GM10248 (cell line): ENCODE measurements at regions of chr11 and their contacts with region 1.

Region 1: DNA sequence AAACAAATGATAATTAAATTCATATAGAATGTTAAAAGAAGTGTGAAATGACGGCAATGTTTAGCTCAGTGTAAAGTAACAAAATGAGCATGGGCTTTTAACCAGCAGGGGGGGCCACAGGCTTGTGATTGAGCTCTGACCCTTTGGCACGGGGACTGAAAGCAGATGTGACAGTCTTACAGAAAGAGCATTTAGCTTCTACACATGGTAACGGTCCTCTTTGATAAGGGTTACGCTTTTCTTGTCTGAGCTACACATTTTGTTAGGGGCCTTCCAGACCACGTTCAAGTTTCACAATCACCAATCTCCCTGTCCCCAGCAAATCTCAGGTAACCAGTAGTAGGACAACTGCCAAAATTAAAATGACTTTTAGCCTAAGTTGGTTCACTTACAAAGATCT is 262.5 kb downstream of the DCDC1 start:
- DNase-seq: peak; percentile 26
- CTCF ChIP-seq: peak; percentile 60

Region 2: DNA sequence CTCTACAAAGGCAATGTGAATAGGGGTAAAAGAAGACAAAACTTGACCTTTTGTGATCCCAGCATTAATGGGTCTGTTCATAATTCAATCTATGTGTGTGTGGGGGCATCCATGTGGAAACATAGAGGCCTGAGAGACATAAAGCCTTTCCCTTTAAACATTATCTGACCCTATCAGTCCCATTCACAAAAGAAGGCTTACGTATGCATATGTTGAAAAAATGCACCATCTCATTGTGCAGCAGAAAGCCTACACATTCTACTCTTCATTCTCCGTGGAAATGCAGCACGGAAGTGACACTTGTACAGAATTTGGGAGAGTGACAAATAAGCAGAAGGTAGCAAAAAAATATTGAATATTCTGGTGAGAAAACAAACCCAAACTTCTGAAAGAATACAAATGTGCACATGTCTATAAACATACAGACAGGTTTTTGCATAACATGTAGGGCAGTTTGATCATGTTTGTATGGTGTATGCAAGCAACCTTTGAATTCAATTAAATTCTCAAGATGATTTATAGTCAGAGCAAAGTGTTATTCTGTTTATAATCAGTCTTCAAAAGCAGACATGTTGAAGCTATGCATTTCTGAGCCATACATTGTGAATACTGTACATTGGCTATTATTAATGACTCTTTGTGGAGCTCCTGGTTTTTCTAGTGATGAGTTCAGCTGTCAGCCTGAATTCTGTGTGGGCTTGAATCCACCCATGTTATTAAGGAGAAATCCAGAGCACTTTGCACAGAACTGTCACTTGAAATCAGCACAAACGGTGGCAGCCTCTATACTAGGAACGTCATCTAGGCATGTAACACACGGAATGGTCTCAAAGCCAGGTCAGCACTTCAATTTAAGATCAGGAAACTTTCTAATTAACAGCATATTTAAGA is 25.7 kb after region 1 on chr11:
- CTCF ChIA-PET with region 1: interaction called, 10 read pairs
- POLR2A ChIA-PET with region 1: no interaction called
- DNase-seq: no peak
- CTCF ChIP-seq: no peak

Region 3: DNA sequence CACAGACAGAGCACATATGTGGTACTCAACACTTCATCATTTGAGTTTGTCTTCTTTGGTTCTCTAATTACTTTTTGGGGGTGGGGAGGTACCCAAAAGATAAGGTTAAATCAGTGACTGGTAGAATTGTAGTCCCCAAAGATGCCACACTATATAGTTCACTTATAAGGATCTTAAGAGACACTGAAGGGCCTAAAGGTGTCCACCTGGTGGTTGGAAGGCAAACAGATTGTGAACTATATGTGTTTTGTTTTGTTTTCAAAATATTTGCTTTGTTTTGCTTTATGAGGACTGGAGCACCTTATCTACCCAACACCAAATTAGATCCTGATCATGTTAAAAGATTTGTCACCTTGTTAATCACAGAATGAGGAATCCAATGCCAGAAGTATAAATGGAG is 126.4 kb after region 1 on chr11:
- CTCF ChIA-PET with region 1: interaction called, 12 read pairs
- POLR2A ChIA-PET with region 1: no interaction called
- DNase-seq: no peak
- CTCF ChIP-seq: no peak

Region 4: DNA sequence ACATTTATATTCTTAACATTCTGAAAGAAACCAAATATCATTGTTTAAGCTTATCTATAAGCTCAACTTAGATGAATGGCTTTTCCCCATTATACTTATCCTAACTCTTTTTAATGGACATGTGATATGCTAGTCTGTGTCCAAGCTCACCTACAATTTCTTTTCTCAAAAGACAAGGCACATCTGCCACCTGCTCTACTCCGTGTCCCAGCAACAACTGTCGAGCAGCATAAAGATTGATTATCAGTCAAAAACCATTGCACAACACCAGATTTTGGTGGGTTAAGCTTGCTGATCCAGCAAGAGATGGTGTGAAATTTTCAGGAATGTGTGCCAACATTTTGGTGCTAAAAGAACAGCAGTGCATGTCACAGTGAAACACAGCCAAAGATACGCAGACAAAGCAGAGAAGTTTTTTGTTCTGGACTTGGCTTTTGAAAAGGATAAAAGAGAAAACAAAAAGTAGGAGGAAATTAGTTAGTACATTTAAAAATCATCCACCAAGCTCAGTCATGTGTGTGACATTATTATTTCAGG is 196.7 kb after region 1 on chr11:
- CTCF ChIA-PET with region 1: no interaction called
- POLR2A ChIA-PET with region 1: no interaction called
- DNase-seq: no peak
- CTCF ChIP-seq: no peak